Mammary epithelial cell (primary cell): ENCODE measurements at regions of chr3 and their contacts with region 1.

Region 1: DNA sequence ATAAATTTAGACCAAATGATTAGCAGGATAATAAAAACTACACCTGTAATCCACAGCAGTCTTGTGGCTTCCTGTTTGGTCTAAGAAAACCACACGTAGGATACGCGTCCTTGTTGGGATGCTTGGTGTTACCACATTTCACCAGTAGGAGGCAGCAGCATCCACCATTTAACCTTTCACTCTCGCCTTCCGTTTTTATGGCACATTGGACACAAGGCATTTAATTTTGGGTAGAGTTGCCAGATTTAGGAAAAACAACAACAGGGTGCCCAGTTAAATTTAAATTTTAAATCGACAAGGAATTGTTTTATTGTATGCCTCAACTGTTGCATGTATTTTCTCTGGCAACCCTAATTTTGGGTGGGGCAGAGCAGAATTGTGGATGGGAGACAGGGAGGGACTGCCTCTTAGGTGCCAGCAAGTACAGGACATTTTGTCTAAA is 6.3 kb downstream of the LRRC31 start:
- DNase-seq: peak; percentile 71
- H3K4me3 ChIP-seq: no peak overlapping the region
- H3K27ac ChIP-seq: no peak overlapping the region
- H3K4me1 ChIP-seq: no peaks in the 10 kb centered on the region
- H3K27me3 ChIP-seq: peaks cover 2% of the 10 kb centered on the region
- CTCF ChIP-seq: peak; percentile 93 to 95

Region 2: GRCh38 chr3:169818316-169818715 is 45.2 kb before region 1 on chr3:
- CTCF ChIA-PET with region 1: no interaction called
- dilution Hi-C with region 1: no loop called
- in situ Hi-C with region 1: no loop called
- intact Hi-C with region 1: no loop called
- DNase-seq: no peak
- H3K4me3 ChIP-seq: no peak overlapping the region
- H3K27ac ChIP-seq: no peak overlapping the region
- H3K4me1 ChIP-seq: no peaks in the 10 kb centered on the region
- H3K27me3 ChIP-seq: peaks cover 2% of the 10 kb centered on the region
- CTCF ChIP-seq: no peak

Region 3: DNA sequence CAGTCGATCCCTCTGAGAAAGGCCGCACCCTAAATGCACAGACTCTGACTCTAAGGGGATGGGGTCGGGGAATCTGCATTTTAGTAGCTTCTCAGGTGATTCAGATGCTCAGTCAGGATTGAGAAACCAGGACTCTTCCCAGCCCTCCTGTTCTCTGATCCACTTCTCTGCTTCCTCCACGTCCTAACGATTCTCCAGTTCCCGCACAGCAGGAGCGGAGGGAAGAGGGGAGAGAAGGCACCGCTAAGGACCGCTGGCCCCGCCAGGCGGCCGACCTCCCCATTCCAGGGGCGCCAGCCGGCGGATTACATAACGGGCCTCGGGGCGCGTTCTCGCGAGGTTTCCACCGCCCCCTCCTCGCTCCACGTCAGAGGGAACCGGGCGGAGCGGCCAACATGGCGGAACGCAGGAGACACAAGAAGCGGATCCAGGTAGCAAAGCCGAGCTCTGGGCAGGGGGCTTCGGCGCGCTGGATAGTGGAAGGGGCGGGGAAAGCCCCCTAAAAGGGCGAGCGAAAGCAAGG is 103.0 kb after region 1 on chr3 and contains the start of gene SEC62:
- CTCF ChIA-PET with region 1: no interaction called
- dilution Hi-C with region 1: no loop called
- in situ Hi-C with region 1: no loop called
- intact Hi-C with region 1: loop called (anchors 1 kb)
- DNase-seq: peak; percentile 83
- H3K4me3 ChIP-seq: peak within 1 kb of the TSS; percentile 71 to 97 (median 87)
- H3K27ac ChIP-seq: peak within 1 kb of the TSS; percentile 93
- H3K4me1 ChIP-seq: peaks cover 6% of the 10 kb centered on the region
- H3K27me3 ChIP-seq: no peaks in the 10 kb centered on the region
- CTCF ChIP-seq: peak; percentile 11 to 49
- total RNA-seq, gene SEC62: 25.2 to 68.7 TPM

Region 4: GRCh38 chr3:170037463-170038433 is 174.3 kb after region 1 on chr3 and contains the start of gene GPR160:
- CTCF ChIA-PET with region 1: no interaction called
- dilution Hi-C with region 1: no loop called
- in situ Hi-C with region 1: no loop called
- intact Hi-C with region 1: loop called (anchors 5 kb)
- DNase-seq: peak; percentile 27
- H3K4me3 ChIP-seq: peak within 1 kb of the TSS; percentile 37 to 55 (median 48)
- H3K27ac ChIP-seq: no peak within 1 kb of the TSS
- H3K4me1 ChIP-seq: peaks cover 8% of the 10 kb centered on the region
- H3K27me3 ChIP-seq: peaks cover 22% of the 10 kb centered on the region
- CTCF ChIP-seq: peak; percentile 45 to 78
- total RNA-seq, gene GPR160: 0.33 to 0.66 TPM

Region 5: GRCh38 chr3:170054204-170054603 is 190.7 kb after region 1 on chr3:
- CTCF ChIA-PET with region 1: no interaction called
- dilution Hi-C with region 1: no loop called
- in situ Hi-C with region 1: no loop called
- intact Hi-C with region 1: loop called (anchors 1 kb)
- DNase-seq: no peak
- H3K4me3 ChIP-seq: no peak overlapping the region
- H3K27ac ChIP-seq: no peak overlapping the region
- H3K4me1 ChIP-seq: no peaks in the 10 kb centered on the region
- H3K27me3 ChIP-seq: peaks cover 3% of the 10 kb centered on the region
- CTCF ChIP-seq: peak in 1 of 2 donors; percentile 38